Colonic mucosa (tissue), 4 donors: ENCODE measurements at regions of chr4 and their contacts with region 1.

Region 1: DNA sequence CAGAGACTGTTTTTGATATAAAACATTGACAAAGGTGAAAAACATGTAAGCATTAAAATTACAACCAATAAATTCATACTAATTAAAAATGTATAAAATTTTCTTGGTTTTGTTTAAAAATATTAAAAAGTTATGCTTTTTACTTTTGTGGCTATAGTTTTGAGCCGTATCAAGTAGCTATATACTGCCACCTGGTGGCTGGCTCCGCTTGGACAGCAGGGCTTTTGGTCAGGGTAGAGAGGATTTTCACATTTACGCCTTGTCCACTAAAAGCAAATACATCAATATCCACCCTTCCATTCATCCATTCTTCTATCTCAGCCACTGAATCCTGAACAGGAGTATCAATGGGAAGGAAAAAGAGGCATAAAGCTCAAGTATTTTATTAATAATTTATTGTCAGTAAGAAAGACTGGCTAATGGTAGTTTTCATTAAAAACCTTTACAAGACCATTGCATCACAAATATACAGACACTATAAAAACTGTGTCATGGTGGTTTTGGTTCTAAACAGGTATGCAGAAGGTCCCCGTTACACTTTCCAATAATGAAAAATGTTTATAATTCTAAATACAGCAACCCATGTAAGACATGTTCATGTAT is 32.1 kb upstream of the MTNR1A start:
- DNase-seq: peak; percentile 75
- H3K4me3 ChIP-seq: no peak overlapping the region
- H3K27ac ChIP-seq: no peak overlapping the region
- H3K4me1 ChIP-seq: no peaks in the 10 kb centered on the region
- H3K27me3 ChIP-seq: no peaks in the 10 kb centered on the region
- CTCF ChIP-seq: peak; percentile 92

Region 2: DNA sequence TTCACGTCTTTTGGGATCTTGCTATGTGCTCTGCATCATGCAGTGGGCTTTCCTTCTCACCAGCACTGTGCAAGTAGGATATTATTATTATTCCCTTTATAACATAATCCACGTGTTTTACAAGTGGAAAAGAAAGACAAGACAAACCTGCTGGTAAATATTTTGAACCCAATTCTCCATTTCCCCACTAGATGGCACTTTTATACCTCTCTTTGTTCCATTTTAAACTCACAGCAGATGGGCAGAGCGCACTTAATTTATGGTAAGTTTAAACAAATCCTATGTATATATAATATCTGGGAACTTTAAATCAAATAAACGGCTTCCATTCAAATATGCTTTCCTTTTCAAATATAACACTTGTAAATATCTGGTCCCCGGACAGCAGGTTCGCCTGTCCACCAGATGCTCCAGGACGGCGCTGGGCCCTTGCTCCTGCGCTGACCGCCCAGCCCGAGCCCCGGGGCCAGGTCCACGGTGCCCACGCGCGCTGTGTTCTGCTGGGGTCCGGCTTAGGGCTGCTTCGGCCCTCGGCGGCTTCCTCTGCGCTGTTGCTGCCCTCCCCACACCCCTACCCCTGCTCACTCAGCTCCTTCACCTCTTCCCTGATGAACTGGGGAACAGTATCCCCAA is 290.4 kb before region 1 on chr4:
- intact Hi-C with region 1: loop called (anchors 2 kb)
- DNase-seq: no peak
- H3K4me3 ChIP-seq: no peak overlapping the region
- H3K27ac ChIP-seq: no peak overlapping the region
- H3K4me1 ChIP-seq: no peaks in the 10 kb centered on the region
- H3K27me3 ChIP-seq: no peaks in the 10 kb centered on the region
- CTCF ChIP-seq: peak; percentile 60

Region 3: DNA sequence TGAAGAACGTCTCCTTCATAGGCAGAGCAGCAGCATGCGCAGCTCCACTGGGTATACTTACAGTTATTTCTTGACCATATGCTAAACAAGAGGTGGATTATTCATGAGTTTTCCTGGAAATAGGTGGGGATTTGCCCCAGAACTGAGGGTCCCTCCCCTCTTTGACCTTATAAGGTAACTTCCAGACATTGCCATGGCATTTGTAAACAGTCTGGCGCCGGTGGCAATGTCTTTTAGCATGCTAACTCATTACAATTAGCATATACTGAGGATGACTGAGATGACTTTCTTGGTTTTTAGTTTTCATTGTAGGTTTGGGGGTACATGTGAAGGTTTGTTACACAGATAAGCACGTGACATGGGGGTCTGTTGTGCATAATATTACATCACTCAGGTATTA is 129.5 kb before region 1 on chr4:
- intact Hi-C with region 1: no loop called
- DNase-seq: no peak
- H3K4me3 ChIP-seq: no peak overlapping the region
- H3K27ac ChIP-seq: no peak overlapping the region
- H3K4me1 ChIP-seq: no peaks in the 10 kb centered on the region
- H3K27me3 ChIP-seq: no peaks in the 10 kb centered on the region
- CTCF ChIP-seq: no peak

Region 4: DNA sequence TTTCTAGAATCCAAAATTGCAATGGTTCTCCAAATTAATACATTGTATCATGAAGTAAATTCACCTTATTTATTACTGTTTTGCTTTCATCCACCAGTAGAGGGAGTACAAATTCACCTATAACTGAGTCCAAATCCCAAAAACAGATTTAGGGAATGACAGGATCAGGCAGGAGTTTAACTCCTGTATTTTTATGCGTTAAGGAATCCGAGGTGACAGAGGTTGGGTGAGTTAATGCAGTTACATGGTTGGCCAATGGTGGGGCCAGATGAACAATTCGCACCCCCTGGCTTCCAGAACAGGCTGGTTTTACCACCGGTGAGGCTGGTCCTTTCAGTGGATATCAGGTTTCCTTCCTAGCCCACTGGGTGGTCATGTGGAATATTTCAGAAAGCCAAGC is 114.6 kb before region 1 on chr4:
- intact Hi-C with region 1: loop called (anchors 5 kb)
- DNase-seq: no peak
- H3K4me3 ChIP-seq: no peak overlapping the region
- H3K27ac ChIP-seq: no peak overlapping the region
- H3K4me1 ChIP-seq: no peaks in the 10 kb centered on the region
- H3K27me3 ChIP-seq: no peaks in the 10 kb centered on the region
- CTCF ChIP-seq: peak; percentile 57

Region 5: DNA sequence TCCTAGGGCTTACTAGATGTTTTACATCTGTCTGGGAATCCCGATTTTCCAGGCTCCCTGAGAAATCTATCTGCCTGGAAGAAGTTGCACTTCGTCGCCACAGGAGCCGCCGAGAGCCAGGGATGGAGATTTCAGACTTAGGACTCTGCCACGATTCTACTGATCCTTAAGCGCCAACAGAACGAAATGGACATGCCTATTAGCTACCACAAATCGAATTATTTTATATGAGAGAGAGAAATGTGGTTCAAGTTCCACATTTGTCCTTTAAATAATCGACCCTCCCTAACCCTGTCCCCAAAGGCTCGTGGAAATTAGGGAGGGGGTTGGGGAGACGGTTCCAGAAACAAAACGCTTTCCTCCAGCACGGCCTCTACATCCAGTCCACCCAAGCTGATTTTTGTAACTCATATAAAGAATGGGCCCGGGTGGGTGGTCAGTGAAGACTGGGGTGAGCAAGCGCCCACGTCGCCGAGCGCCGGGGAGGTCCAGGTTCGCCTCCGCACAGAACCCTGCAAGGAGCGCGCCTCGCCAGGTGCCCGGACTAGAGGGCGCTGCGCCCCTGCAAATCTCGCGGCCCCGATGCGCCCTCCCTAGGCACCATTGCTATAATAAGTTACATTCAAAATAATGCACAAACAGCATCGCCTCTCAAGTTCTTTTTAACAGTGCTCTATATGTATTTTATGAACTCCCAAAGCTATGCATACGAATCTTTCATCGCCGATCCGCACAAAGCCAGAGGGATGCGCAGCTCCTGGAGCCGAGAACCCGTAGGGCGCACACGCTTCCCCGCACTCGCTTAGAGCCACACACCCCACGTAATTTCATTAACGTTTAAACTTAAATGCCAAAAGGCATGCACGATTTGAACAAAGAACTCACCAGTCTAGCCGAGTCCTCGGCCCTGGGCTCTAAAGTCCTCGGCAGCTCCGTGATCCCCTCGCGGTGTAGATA is 138.2 kb after region 1 on chr4:
- intact Hi-C with region 1: no loop called
- DNase-seq: peak; percentile 87
- H3K4me3 ChIP-seq: peak overlapping the region; percentile 76
- H3K27ac ChIP-seq: peak overlapping the region; percentile 92
- H3K4me1 ChIP-seq: no peaks in the 10 kb centered on the region
- H3K27me3 ChIP-seq: no peaks in the 10 kb centered on the region
- CTCF ChIP-seq: peak; percentile 66